ENCODE measurements at regions of chr11 and their contacts with region 1.

Region 1: DNA sequence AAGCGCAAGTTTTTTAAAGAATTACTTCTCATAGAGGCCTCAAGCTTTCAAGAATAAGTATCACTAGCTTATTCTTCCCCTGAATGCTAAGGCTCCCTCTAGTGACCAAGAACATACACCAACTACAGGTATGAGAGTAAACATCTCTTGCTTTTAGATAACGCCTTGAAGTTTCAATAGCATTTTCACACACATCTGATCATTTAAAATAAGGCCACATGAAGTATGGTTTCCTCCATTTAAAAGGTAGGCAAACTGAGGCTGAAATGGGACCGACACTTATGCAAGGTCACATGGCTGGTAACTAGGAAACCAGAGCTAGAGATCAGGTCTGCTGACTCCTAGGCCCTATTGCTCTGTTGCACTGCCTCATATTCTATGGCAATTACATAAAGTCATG is 66.5 kb downstream of the CCDC34 start:
- DNase-seq: no peak
- H3K4me3 Mint-ChIP-seq: no peak overlapping the region
- H3K27ac Mint-ChIP-seq: no peak overlapping the region
- H3K4me1 Mint-ChIP-seq: peaks cover 5% of the 10 kb centered on the region
- H3K27me3 Mint-ChIP-seq: peaks cover 12% of the 10 kb centered on the region

Region 2: DNA sequence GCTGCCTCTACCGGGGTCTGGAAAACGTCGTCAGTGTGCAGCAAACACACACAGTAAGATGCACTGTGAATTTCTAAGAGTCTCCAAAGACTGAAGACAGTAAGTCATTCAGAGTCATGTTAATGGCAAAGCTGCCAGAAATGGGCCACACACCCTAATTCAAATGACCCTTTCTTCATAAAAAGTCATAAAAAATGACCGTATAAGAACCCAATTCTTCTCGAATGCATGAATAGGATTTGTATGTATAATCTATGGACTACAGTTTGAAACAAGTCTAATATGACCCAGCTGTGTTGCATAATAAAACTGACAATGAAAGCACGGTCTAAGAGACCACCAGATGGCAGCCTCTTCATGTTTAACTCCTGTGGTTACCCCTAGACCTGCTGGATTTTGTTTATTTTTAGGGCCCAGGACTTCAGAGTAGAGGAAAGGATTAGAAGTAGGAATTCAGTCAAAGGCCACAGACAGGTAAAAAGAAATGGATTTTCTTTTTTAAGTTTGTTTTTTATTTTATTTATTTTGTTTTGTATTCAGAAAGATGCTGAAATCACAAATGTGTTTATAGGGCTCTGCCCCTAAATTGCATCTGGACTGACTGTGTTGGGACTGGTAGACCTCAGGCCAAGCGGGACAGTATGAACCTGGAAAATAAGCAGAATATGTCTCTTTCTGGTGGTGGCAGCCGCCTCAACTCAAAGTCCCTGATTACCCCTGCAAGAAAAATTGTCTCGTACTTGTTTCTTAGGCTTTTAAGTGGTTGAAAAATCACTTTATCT is 542.6 kb before region 1 on chr11:
- CTCF ChIA-PET with region 1: no interaction called
- intact Hi-C with region 1: loop called (anchors 5 kb)
- DNase-seq: peak; percentile 17
- H3K4me3 Mint-ChIP-seq: no peak overlapping the region
- H3K27ac Mint-ChIP-seq: no peak overlapping the region
- H3K4me1 Mint-ChIP-seq: no peaks in the 10 kb centered on the region
- H3K27me3 Mint-ChIP-seq: no peaks in the 10 kb centered on the region

Region 3: DNA sequence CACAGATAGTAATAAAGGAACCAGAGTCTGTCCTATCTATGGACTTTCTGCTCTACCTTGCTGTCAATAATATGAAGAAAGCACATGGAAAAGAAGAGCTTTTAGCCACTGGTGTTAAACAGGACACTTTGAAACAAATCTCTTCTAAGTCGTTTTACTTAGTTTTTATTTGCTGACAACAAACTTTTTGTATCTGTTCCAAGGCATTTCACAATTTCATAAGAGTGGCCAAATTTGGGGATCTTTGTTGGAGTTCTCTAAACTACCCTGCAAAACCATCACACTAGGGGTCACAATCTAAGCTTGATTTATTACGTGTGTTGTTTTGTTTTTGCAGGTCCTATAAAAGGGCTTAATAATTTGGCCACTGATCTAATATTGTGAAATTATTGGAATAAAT is 201.4 kb before region 1 on chr11:
- CTCF ChIA-PET with region 1: no interaction called
- intact Hi-C with region 1: no loop called
- DNase-seq: no peak
- H3K4me3 Mint-ChIP-seq: no peak overlapping the region
- H3K27ac Mint-ChIP-seq: no peak overlapping the region
- H3K4me1 Mint-ChIP-seq: no peaks in the 10 kb centered on the region
- H3K27me3 Mint-ChIP-seq: no peaks in the 10 kb centered on the region

Region 4: GRCh38 chr11:27183672-27184457 is 112.6 kb before region 1 on chr11:
- CTCF ChIA-PET with region 1: no interaction called
- intact Hi-C with region 1: loop called (anchors 10 kb)
- DNase-seq: peak; percentile 68
- H3K4me3 Mint-ChIP-seq: no peak overlapping the region
- H3K27ac Mint-ChIP-seq: no peak overlapping the region
- H3K4me1 Mint-ChIP-seq: no peaks in the 10 kb centered on the region
- H3K27me3 Mint-ChIP-seq: peaks cover 16% of the 10 kb centered on the region

Region 5: GRCh38 chr11:27201454-27202236 is 94.9 kb before region 1 on chr11:
- CTCF ChIA-PET with region 1: no interaction called
- intact Hi-C with region 1: loop called (anchors 1 kb)
- DNase-seq: no peak
- H3K4me3 Mint-ChIP-seq: no peak overlapping the region
- H3K27ac Mint-ChIP-seq: no peak overlapping the region
- H3K4me1 Mint-ChIP-seq: no peaks in the 10 kb centered on the region
- H3K27me3 Mint-ChIP-seq: peaks cover 2% of the 10 kb centered on the region

Region 6: DNA sequence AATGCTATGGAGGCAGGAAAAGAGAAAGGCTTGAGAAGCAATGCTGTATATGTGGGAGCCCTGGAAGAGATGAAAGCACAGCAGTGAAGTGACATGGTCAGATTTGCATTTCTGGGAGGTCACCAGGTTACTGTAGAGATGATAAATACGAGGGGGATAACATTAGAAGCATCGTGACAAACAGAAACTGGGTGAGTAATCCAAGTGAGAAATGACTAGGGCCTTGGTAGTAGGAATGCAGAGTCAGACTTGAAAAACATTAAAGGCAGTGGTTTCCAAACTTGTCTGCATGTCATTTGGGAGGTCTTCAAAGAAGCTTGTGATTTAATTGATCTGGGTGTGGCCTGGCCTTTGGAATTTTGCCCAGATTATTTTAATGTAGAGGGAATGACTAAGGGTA is 22.6 kb after region 1 on chr11:
- CTCF ChIA-PET with region 1: interaction called, 5 read pairs
- intact Hi-C with region 1: loop called (anchors 1 kb)
- DNase-seq: peak; percentile 23
- H3K4me3 Mint-ChIP-seq: no peak overlapping the region
- H3K27ac Mint-ChIP-seq: no peak overlapping the region
- H3K4me1 Mint-ChIP-seq: peaks cover 9% of the 10 kb centered on the region
- H3K27me3 Mint-ChIP-seq: peaks cover 7% of the 10 kb centered on the region